ENCODE measurements at regions of chr10 and their contacts with region 1.

Region 1: GRCh38 chr10:7525314-7526016 is 114.6 kb upstream of the SFMBT2 start:
- DNase-seq: peak; percentile 85
- CTCF ChIP-seq: peak; percentile 82

Region 2: DNA sequence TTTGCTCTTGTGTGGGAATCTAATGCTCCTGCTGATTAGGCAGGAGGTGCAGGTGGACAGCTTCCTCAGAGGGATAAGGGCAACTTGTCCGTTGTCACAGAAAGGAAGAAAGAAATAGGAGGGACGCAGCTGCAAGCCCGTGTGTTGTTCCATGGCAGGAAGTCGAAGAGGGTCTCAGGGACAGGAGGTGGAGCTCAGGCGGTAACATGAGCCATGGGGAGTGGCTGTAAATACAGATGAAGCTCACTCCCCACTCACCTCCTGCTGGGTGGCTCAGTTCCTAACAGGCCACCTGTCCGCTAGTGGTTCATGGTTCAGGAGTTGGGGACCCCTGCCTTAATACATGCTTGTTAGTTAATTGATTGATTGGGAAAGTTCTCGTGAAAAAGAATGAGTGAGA is 13.0 kb before region 1 on chr10:
- CTCF ChIA-PET with region 1: interaction called, 38 read pairs
- POLR2A ChIA-PET with region 1: no interaction called
- DNase-seq: no peak
- CTCF ChIP-seq: no peak

Region 3: GRCh38 chr10:7687228-7687907 is 161.9 kb after region 1 on chr10:
- CTCF ChIA-PET with region 1: interaction called, 82 read pairs
- POLR2A ChIA-PET with region 1: no interaction called
- DNase-seq: peak; percentile 78
- CTCF ChIP-seq: peak; percentile 87

Region 4: GRCh38 chr10:7722927-7723529 is 197.6 kb after region 1 on chr10:
- CTCF ChIA-PET with region 1: no interaction called
- POLR2A ChIA-PET with region 1: no interaction called
- DNase-seq: no peak
- CTCF ChIP-seq: no peak

Region 5: GRCh38 chr10:9209105-9209798 is 1683.8 kb after region 1 on chr10:
- CTCF ChIA-PET with region 1: interaction called, 17 read pairs
- POLR2A ChIA-PET with region 1: interaction called, 3 read pairs
- DNase-seq: peak; percentile 39
- CTCF ChIP-seq: peak; percentile 81

Region 6: DNA sequence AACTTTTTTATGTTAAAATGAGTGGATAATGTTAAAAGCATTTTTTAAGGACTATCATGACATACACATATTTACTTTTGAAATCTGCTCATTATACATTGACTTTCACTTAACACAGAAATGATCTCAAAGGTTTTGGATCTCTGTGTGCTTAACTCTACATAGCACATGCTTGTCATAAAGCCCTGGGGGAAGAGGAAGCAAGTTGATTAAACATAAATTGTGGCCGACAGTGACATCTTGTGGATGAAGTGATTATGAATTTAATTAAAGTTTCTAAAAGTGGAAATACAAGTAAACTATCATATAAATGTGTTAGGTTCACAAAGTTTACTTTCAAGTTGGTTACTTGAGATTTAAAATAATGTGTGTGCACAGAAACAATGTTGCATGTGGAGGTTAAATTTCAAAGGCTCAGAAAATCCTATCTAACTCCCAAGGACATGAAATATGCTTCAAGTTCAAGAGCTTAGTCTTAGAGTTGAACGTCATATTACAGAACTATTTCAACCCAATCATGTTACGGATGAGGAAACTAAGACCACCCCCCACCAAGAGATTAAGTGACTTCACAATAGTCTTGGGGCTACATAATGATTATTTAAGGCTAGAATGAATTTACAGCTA is 1776.8 kb after region 1 on chr10:
- CTCF ChIA-PET with region 1: interaction called, 15 read pairs
- POLR2A ChIA-PET with region 1: no interaction called
- DNase-seq: peak; percentile 16
- CTCF ChIP-seq: peak; percentile 38